WTC11 (cell line): ENCODE measurements at regions of chr2 and their contacts with region 1.

Region 1: GRCh38 chr2:8693155-8693821 is 11.4 kb downstream of the ID2 start:
- DNase-seq: peak; percentile 72
- ATAC-seq: peak; percentile 93
- H3K4me3 Mint-ChIP-seq: peak overlapping the region; percentile 48
- H3K27ac Mint-ChIP-seq: no peak overlapping the region
- H3K4me1 Mint-ChIP-seq: peaks cover 9% of the 10 kb centered on the region
- H3K27me3 Mint-ChIP-seq: no peaks in the 10 kb centered on the region; the same call in 1 of the 2 replicates
- CTCF ChIP-seq: peak; percentile 65

Region 2: DNA sequence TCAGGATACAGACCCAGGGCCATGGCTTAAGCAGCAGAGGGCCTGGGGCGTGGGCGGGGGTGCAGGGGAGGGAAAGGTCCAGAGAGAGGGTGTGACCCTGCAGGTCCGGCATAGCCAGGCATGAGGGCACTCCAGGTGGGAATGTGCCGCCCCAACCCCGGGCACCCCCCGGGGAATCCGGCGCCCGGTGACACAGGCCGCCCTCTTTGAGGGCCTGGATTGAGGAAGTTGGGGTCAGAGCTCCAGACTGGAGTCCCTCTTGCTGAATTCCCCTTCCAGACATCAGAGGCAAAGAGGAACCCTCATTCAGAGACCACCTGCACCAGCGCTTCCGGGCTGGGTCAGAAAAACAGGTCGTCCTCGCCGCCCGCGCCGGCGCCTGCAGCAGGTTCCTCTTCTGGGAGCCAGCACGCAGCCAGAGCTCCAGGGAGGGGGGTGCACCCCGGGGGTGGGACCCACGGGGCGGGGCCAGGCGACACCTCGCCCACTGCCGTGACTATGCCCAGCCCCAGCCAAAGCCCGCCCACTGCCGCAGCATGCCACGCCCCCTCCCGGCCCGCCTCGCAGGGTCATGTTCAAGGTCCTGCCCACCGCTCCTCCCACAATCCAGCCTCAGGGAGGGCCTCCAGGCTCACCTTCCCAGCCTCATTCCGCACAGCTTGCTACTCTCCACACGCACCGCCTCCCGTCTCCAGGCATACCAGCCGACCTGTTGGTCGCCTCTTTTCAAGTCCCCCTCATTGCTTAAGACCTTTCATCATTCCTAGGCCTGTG is 109.7 kb before region 1 on chr2:
- CTCF ChIA-PET with region 1: interaction called, 10 read pairs
- POLR2A ChIA-PET with region 1: no interaction called
- DNase-seq: peak; percentile 99
- ATAC-seq: peak; percentile 94
- H3K4me3 Mint-ChIP-seq: peak overlapping the region; percentile 50
- H3K27ac Mint-ChIP-seq: peak overlapping the region; percentile 86
- H3K4me1 Mint-ChIP-seq: peaks cover 53% of the 10 kb centered on the region
- H3K27me3 Mint-ChIP-seq: no peaks in the 10 kb centered on the region; the same call in none of the 2 replicates
- CTCF ChIP-seq: no peak

Region 3: DNA sequence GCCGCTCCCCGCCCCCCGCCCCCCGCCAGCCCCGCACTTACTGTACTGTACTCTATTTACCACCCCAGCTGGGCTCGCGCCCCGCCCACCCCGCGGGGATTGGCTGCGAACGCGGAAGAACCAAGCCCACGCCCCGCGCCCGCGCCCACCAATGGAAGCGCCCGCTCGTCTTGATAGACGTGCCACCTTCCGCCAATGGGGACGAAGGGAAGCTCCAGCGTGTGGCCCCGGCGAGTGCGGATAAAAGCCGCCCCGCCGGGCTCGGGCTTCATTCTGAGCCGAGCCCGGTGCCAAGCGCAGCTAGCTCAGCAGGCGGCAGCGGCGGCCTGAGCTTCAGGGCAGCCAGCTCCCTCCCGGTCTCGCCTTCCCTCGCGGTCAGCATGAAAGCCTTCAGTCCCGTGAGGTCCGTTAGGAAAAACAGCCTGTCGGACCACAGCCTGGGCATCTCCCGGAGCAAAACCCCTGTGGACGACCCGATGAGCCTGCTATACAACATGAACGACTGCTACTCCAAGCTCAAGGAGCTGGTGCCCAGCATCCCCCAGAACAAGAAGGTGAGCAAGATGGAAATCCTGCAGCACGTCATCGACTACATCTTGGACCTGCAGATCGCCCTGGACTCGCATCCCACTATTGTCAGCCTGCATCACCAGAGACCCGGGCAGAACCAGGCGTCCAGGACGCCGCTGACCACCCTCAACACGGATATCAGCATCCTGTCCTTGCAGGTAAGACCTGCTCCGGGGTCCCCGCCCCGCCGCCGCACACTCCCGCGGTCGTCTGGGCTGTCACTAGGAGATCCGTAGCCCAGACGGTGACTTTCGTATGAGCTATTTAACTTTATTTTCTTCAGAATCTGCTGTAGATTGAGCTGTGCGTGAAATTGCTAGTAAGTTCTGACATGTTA is 11.2 kb before region 1 on chr2 and contains the start of gene ID2:
- CTCF ChIA-PET with region 1: interaction called, 17 read pairs
- POLR2A ChIA-PET with region 1: no interaction called
- DNase-seq: peak; percentile 99
- ATAC-seq: peak; percentile 71
- H3K4me3 Mint-ChIP-seq: peak within 1 kb of the TSS; percentile 94
- H3K27ac Mint-ChIP-seq: peak within 1 kb of the TSS; percentile 99
- H3K4me1 Mint-ChIP-seq: peaks cover 49% of the 10 kb centered on the region
- H3K27me3 Mint-ChIP-seq: peaks cover 42% of the 10 kb centered on the region
- CTCF ChIP-seq: no peak
- total RNA-seq, gene ID2: 38.6 to 55.0 TPM (median 47.0 TPM) in 3 replicates

Region 4: GRCh38 chr2:8704906-8705305 is 11.6 kb after region 1 on chr2:
- CTCF ChIA-PET with region 1: interaction called, 15 read pairs
- POLR2A ChIA-PET with region 1: no interaction called
- DNase-seq: no peak
- ATAC-seq: no peak
- H3K4me3 Mint-ChIP-seq: no peak overlapping the region
- H3K27ac Mint-ChIP-seq: no peak overlapping the region
- H3K4me1 Mint-ChIP-seq: peaks cover 10% of the 10 kb centered on the region
- H3K27me3 Mint-ChIP-seq: no peaks in the 10 kb centered on the region
- CTCF ChIP-seq: no peak

Region 5: GRCh38 chr2:8743261-8743660 is 50.0 kb after region 1 on chr2:
- CTCF ChIA-PET with region 1: interaction called, 10 read pairs
- POLR2A ChIA-PET with region 1: no interaction called
- DNase-seq: no peak
- ATAC-seq: no peak
- H3K4me3 Mint-ChIP-seq: no peak overlapping the region
- H3K27ac Mint-ChIP-seq: no peak overlapping the region
- H3K4me1 Mint-ChIP-seq: no peaks in the 10 kb centered on the region
- H3K27me3 Mint-ChIP-seq: no peaks in the 10 kb centered on the region
- CTCF ChIP-seq: no peak